ENCODE measurements at regions of chr22 and their contacts with region 1.

Region 1: GRCh38 chr22:30005213-30005857 is 74.9 kb upstream of the HORMAD2 start:
- DNase-seq: peak; percentile 73 to 82
- ATAC-seq: peak; percentile 87 to 90 (median 87)
- H3K4me3 ChIP-seq: no peak overlapping the region
- H3K27ac ChIP-seq: no peak overlapping the region
- H3K4me1 ChIP-seq: peaks cover 13% of the 10 kb centered on the region
- H3K27me3 ChIP-seq: no peaks in the 10 kb centered on the region
- CTCF ChIP-seq: peak; percentile 96

Region 2: DNA sequence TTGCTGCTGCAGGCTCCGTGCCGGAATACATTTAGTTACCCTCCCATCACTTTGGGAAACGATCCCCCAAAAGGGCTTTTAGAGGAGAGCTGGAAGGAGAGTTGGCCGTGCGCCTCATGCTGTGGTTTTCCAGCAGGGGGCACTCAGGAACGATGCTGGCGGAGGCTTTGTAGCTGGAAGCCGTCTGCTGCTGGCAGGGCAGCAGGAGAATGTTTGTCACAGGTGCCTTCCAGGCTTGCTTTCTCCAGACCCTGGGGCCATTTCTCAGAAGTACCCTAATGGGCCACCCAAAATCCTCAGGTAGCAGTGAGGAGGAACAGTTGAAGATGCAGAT is 315.5 kb before region 1 on chr22:
- intact Hi-C with region 1: loop called (anchors 2 to 5 kb)
- DNase-seq: peak; percentile 67 to 82
- ATAC-seq: peak; percentile 77 to 90 (median 86)
- H3K4me3 ChIP-seq: no peak overlapping the region
- H3K27ac ChIP-seq: no peak overlapping the region
- H3K4me1 ChIP-seq: peaks cover 9% of the 10 kb centered on the region
- H3K27me3 ChIP-seq: no peaks in the 10 kb centered on the region
- CTCF ChIP-seq: peak; percentile 79

Region 3: DNA sequence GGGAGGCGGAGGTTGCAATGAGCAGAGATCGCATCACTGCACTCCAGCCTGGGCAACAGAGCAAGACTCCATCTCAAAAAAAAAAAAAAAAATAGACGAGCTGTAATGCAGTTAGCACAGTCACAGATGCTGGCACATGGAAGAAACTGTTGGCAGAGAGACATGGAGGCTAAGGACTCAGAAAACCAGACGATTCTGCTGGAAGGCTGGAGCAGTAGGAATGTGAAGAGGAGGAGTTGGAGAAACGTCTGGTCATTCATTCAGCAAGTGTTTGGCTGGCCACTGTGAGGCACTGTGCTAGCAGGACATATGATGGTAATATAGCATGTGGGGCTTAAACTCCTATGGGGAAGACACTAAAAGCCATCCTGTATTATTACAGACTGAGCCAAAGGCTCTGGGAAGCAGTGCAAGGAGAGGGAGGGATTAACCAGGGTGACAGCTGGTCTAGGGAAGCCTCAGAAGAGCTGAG is 233.1 kb before region 1 on chr22:
- intact Hi-C with region 1: loop called (anchors 10 kb)
- DNase-seq: no peak
- ATAC-seq: peak; percentile 23 to 43 (median 42)
- H3K4me3 ChIP-seq: no peak overlapping the region
- H3K27ac ChIP-seq: peak overlapping the region; percentile 76
- H3K4me1 ChIP-seq: peaks cover 44% of the 10 kb centered on the region
- H3K27me3 ChIP-seq: no peaks in the 10 kb centered on the region
- CTCF ChIP-seq: no peak

Region 4: GRCh38 chr22:29837780-29838598 is 167.3 kb before region 1 on chr22 and contains the start of gene ASCC2:
- intact Hi-C with region 1: loop called in 1 of 2 experiments (anchors 10 kb)
- DNase-seq: peak; percentile 99 to 100
- ATAC-seq: peak; percentile 97 to 100 (median 98)
- H3K4me3 ChIP-seq: peak within 1 kb of the TSS; percentile 97
- H3K27ac ChIP-seq: peak within 1 kb of the TSS; percentile 94
- H3K4me1 ChIP-seq: peaks cover 22% of the 10 kb centered on the region
- H3K27me3 ChIP-seq: no peaks in the 10 kb centered on the region
- CTCF ChIP-seq: no peak
- total RNA-seq, gene ASCC2: 47.1 to 58.6 (median 54.6) TPM

Region 5: GRCh38 chr22:29855611-29856181 is 149.6 kb before region 1 on chr22:
- intact Hi-C with region 1: loop called in 1 of 2 experiments (anchors 5 kb)
- DNase-seq: peak; percentile 49 to 82
- ATAC-seq: peak; percentile 89 to 96 (median 90)
- H3K4me3 ChIP-seq: no peak overlapping the region
- H3K27ac ChIP-seq: peak overlapping the region; percentile 86
- H3K4me1 ChIP-seq: peaks cover 12% of the 10 kb centered on the region
- H3K27me3 ChIP-seq: no peaks in the 10 kb centered on the region
- CTCF ChIP-seq: peak; percentile 27

Region 6: DNA sequence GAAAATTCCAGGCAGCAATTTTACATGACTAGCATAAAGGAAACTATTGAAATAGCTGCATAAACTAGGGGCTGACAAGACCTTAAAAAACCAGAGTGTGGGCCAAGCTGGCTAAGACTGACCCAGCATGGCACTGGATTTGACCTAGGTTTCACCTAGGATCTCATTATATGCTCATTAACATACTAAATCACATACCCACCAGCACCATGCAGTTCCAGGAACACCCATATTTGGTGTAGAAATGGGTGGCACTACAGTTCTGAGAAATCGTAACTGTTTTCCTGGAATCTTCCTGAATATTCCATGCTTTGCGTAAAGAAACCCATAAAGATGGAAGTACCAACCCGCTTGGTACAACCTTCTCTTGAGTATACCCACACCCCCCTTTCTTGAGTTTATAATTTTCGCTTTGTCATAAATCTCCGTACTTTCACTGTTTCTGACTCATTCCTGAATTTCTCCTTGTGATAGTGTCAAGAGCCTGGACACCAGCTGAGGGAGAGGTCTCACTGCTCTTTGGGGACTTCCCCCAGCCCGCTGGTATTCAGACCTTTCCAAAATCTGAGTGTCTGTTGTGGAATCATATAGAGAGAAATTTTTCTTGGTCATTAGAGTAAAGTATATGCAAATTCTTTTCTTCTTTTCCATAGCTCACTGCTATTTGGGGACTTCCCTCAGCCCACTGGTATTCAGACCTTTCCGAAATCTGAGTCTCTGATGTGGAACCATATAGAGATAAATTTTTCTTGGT is 67.2 kb before region 1 on chr22:
- intact Hi-C with region 1: no loop called
- DNase-seq: no peak
- ATAC-seq: no peak
- H3K4me3 ChIP-seq: no peak overlapping the region
- H3K27ac ChIP-seq: no peak overlapping the region
- H3K4me1 ChIP-seq: peaks cover 38% of the 10 kb centered on the region
- H3K27me3 ChIP-seq: no peaks in the 10 kb centered on the region
- CTCF ChIP-seq: no peak

Measured in psoas muscle (tissue), 8 donors.